WTC11 (cell line): ENCODE measurements at regions of chr3 and their contacts with region 1.

Region 1: GRCh38 chr3:42891042-42891441 is 14.9 kb upstream of the ZNF662 start:
- DNase-seq: no peak
- ATAC-seq: peak; percentile 93
- H3K4me3 Mint-ChIP-seq: no peak overlapping the region
- H3K27ac Mint-ChIP-seq: peak overlapping the region; percentile 98
- H3K4me1 Mint-ChIP-seq: peaks cover 57% of the 10 kb centered on the region
- H3K27me3 Mint-ChIP-seq: no peaks in the 10 kb centered on the region
- CTCF ChIP-seq: no peak

Region 2: GRCh38 chr3:42875325-42876151 is 15.5 kb before region 1 on chr3 and contains the start of gene CYP8B1:
- CTCF ChIA-PET with region 1: no interaction called
- POLR2A ChIA-PET with region 1: no interaction called
- DNase-seq: no peak
- ATAC-seq: no peak
- H3K4me3 Mint-ChIP-seq: no peak within 1 kb of the TSS
- H3K27ac Mint-ChIP-seq: no peak within 1 kb of the TSS
- H3K4me1 Mint-ChIP-seq: peaks cover 9% of the 10 kb centered on the region
- H3K27me3 Mint-ChIP-seq: no peaks in the 10 kb centered on the region; the same call in 1 of the 2 replicates
- CTCF ChIP-seq: no peak
- total RNA-seq, gene CYP8B1: 0.13 to 0.18 TPM (median 0.16 TPM) in 3 replicates

Region 3: GRCh38 chr3:43061101-43061895 is 170.3 kb after region 1 on chr3:
- CTCF ChIA-PET with region 1: no interaction called
- POLR2A ChIA-PET with region 1: interaction called, 13 read pairs
- DNase-seq: no peak
- ATAC-seq: no peak
- H3K4me3 Mint-ChIP-seq: no peak overlapping the region
- H3K27ac Mint-ChIP-seq: no peak overlapping the region
- H3K4me1 Mint-ChIP-seq: peaks cover 10% of the 10 kb centered on the region
- H3K27me3 Mint-ChIP-seq: peaks cover 8% of the 10 kb centered on the region; the same call in 1 of the 2 replicates
- CTCF ChIP-seq: no peak